SK-N-SH (cell line): ENCODE measurements at regions of chr17 and their contacts with region 1.

Region 1: DNA sequence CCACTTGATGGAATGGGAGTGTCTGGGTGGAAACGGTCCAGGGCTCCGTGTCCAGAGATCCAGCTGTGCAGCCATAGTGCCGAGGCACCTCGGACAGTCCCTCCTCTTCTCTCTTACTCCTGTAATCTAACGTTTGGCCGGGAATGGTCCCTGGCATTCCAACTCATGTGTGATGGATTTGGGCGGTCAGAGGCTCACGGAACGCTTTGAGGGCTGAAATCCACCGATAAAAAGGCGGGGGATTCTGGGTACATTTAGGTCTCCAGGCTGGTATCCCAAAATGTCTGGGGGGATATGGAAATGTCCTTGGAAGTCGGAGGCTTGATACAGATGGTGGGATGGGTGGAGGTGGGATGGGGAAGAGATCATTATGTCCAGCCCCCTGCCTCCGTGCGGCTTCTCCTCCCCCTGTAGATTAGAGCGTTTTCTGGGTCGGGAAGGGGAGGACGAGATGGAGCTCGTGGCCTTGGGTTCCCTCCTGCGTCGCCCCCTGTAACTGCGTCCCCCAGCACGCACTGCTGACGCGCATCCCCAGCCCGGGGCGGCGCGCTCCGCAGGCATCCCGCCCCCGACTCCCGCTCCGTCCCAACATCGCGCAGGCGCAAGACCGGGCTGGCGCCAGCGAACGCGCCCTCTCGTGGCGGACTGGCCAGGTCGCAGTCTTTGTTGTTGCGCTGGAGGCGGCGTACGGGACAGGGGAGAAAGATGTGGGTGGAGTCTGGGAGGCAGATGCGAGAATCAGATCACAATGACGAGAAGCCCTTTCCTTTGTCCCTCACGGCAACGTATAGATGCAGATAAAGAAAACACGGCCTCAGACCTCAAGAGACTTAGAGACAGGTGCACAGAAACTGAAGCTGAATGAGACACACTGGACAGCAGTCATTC is 4.5 kb upstream of the SGCA start:
- DNase-seq: peak; percentile 100
- H3K4me3 ChIP-seq: peak overlapping the region; percentile 60 to 72
- H3K27ac ChIP-seq: peak overlapping the region; percentile 3 to 91; a peak in 3 of 4 replicates
- H3K4me1 ChIP-seq: peaks cover 3 to 10% of the 10 kb centered on the region in 2 experiments; a peak in 1 of 4 replicates
- H3K27me3 ChIP-seq: no peaks in the 10 kb centered on the region
- CTCF ChIP-seq: peak; percentile 97
- EP300 ChIP-seq: peak in 1 of 2 experiments; percentile 44; a peak in 1 of 4 replicates
- RAD21 ChIP-seq: peak; percentile 72

Region 2: GRCh38 chr17:49935526-49936210 is 225.6 kb before region 1 on chr17:
- CTCF ChIA-PET with region 1: no interaction called
- POLR2A ChIA-PET with region 1: no interaction called
- DNase-seq: no peak
- H3K4me3 ChIP-seq: no peak overlapping the region
- H3K27ac ChIP-seq: no peak overlapping the region
- H3K4me1 ChIP-seq: peaks cover 0 to 9% of the 10 kb centered on the region in 2 experiments; a peak in 1 of 4 replicates
- H3K27me3 ChIP-seq: peaks cover 96% of the 10 kb centered on the region
- CTCF ChIP-seq: no peak
- EP300 ChIP-seq: no peak
- RAD21 ChIP-seq: no peak

Region 3: GRCh38 chr17:50107790-50108414 is 53.4 kb before region 1 on chr17:
- CTCF ChIA-PET with region 1: interaction called, 71 read pairs
- POLR2A ChIA-PET with region 1: interaction called, 4 read pairs
- DNase-seq: no peak
- H3K4me3 ChIP-seq: no peak overlapping the region
- H3K27ac ChIP-seq: no peak overlapping the region
- H3K4me1 ChIP-seq: peaks cover 0 to 26% of the 10 kb centered on the region in 2 experiments; a peak in 1 of 4 replicates
- H3K27me3 ChIP-seq: no peaks in the 10 kb centered on the region
- CTCF ChIP-seq: no peak
- EP300 ChIP-seq: no peak
- RAD21 ChIP-seq: no peak

Region 4: DNA sequence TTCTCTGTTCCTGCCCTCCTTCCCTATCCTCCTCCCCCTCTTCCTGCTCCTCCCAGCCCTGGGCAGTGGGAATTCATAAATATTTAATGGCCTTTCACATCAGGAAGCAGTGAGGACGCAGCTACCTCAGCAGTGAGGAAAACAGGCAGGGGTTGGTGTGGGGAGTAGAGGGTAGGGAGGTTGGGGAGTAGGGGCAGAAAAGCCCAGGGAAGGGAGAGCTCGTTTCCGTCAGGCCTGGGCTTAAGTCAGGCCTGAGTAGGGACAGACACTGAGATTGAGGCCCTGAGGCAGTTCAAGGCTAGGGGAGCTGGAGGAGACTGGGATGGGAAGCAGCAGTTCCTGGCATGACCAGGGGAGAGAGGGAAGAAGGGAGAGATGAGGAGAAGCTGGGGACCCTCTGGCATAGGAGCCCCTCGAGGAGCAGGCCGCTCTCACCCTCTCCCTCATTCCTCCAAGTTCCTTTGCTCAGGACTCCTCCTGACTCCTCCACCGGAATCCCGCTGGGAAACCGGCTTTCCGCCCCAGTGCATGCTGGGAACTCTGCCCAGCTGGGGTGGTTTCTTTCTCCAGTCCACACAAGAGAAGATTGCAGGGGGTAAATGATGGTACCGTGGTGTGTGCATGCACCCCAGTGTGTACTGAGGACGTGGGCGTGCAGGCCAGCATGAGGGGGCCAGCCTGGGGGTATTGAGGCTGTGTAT is 37.5 kb before region 1 on chr17:
- CTCF ChIA-PET with region 1: interaction called, 17 read pairs
- POLR2A ChIA-PET with region 1: interaction called, 4 read pairs
- DNase-seq: peak; percentile 61
- H3K4me3 ChIP-seq: no peak overlapping the region
- H3K27ac ChIP-seq: no peak overlapping the region
- H3K4me1 ChIP-seq: peaks cover 0 to 7% of the 10 kb centered on the region in 2 experiments; a peak in 1 of 4 replicates
- H3K27me3 ChIP-seq: no peaks in the 10 kb centered on the region
- CTCF ChIP-seq: no peak
- EP300 ChIP-seq: no peak
- RAD21 ChIP-seq: no peak

Region 5: GRCh38 chr17:50139950-50140871 is 21.1 kb before region 1 on chr17:
- CTCF ChIA-PET with region 1: interaction called, 169 read pairs
- POLR2A ChIA-PET with region 1: interaction called, 3 read pairs
- DNase-seq: peak; percentile 98
- H3K4me3 ChIP-seq: no peak overlapping the region; a peak in 1 of 4 replicates
- H3K27ac ChIP-seq: peak overlapping the region in 1 of 2 experiments; percentile 40; a peak in 2 of 4 replicates
- H3K4me1 ChIP-seq: peaks cover 0 to 7% of the 10 kb centered on the region in 2 experiments; a peak in 1 of 4 replicates
- H3K27me3 ChIP-seq: no peaks in the 10 kb centered on the region
- CTCF ChIP-seq: peak; percentile 96
- EP300 ChIP-seq: peak in 1 of 2 experiments; percentile 27; a peak in 1 of 4 replicates
- RAD21 ChIP-seq: peak; percentile 82

Region 6: DNA sequence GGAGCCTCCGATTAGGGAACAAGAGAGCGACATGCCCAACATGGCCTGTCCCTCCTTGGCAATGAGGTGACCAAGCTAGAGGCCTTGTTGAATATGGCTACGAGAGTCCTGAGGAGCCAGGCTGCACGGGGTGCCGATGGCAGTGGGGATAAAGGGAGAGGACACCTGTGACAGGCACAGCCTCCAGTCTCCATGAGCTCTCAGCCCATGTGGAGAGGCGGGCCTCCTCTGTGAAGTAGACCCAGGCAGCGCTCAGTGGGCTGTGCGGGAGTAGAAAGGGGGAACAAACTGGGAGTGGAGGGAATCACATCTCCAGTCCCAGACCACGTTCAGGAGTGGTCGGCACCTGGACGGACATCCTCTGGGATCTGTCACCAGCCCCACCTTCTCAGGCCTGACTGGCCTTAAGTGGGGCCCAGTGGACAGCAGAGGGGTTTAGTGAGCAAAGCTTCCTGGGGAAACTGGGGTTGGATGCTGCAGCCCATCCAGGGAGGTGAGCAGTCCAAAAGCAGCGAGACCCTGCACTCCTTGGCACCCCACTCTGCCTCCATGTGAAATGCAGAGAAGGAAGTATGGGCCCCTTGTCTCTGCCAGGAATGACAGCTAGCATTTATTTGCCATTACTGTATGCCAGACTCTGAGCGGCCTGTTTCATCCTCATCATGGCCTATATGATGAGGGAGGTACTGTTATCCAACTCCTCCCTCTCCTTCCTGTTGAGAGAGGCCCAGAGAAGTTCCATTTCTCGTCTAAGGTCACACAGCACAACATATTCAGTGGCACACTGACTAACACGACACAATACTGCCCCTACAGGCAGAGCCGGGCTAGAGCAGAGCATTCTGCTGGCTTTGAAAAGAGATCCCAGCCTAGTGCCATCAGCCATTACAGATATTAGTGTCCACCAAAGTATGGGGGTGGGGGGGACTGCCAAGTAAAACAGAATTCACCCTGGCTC is 108.5 kb after region 1 on chr17:
- CTCF ChIA-PET with region 1: interaction called, 13 read pairs
- POLR2A ChIA-PET with region 1: no interaction called
- DNase-seq: peak; percentile 87
- H3K4me3 ChIP-seq: no peak overlapping the region
- H3K27ac ChIP-seq: peak overlapping the region in 1 of 2 experiments; percentile 42; a peak in 1 of 4 replicates
- H3K4me1 ChIP-seq: peaks cover 35 to 53% of the 10 kb centered on the region in 2 experiments; a peak in 3 of 4 replicates
- H3K27me3 ChIP-seq: no peaks in the 10 kb centered on the region
- CTCF ChIP-seq: peak; percentile 99
- EP300 ChIP-seq: no peak
- RAD21 ChIP-seq: peak; percentile 97

Region 7: GRCh38 chr17:50297407-50297865 is 136.2 kb after region 1 on chr17:
- CTCF ChIA-PET with region 1: interaction called, 388 read pairs
- POLR2A ChIA-PET with region 1: no interaction called
- DNase-seq: peak; percentile 90
- H3K4me3 ChIP-seq: no peak overlapping the region; a peak in 1 of 4 replicates
- H3K27ac ChIP-seq: no peak overlapping the region
- H3K4me1 ChIP-seq: no peaks in the 10 kb centered on the region
- H3K27me3 ChIP-seq: no peaks in the 10 kb centered on the region
- CTCF ChIP-seq: peak; percentile 99
- EP300 ChIP-seq: no peak
- RAD21 ChIP-seq: peak; percentile 100